Left ventricle myocardium superior (tissue), 1 donor: ENCODE measurements at regions of chr1 and their contacts with region 1.

Region 1: DNA sequence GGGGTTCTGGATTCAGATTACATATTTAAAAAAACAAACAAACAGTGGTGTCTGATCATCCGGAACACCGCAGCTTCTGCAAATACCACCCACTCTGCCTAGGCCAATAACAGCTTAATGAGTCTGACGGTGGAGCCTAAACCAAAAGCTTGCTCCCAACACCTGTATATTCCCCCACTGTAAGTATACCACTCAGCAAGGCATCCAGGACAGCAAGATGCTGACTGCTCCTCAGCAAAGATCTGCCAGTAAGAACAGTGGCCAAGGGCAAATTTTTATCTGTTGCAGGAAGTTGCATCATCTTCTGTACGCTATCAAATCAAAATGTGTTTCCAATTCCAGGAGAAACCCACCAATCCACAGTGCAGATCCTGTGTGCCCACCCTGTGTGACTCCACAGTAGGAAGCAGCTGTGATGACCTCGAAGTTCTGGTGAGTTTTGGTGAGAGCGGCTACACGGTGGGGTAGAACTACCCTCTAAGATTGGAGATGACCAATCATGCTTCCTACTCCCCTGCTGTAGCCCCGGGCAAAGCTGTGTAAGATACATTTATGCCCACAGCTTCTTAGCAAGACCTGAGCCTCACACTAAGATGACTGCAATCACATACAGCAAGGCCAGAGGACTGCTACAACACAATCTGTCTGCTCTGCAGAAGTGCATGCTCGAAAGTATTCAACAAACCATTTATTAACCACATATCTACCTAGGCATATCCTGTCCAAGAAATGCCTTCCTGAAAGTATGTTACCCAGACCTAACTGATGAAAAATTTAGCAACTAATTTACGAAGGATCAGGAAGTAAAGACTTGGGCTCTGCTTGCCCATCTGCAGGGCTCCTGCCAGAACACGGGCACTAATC is 30.5 kb downstream of the SIPA1L2 start:
- DNase-seq: no peak
- ATAC-seq: no peak

Region 2: DNA sequence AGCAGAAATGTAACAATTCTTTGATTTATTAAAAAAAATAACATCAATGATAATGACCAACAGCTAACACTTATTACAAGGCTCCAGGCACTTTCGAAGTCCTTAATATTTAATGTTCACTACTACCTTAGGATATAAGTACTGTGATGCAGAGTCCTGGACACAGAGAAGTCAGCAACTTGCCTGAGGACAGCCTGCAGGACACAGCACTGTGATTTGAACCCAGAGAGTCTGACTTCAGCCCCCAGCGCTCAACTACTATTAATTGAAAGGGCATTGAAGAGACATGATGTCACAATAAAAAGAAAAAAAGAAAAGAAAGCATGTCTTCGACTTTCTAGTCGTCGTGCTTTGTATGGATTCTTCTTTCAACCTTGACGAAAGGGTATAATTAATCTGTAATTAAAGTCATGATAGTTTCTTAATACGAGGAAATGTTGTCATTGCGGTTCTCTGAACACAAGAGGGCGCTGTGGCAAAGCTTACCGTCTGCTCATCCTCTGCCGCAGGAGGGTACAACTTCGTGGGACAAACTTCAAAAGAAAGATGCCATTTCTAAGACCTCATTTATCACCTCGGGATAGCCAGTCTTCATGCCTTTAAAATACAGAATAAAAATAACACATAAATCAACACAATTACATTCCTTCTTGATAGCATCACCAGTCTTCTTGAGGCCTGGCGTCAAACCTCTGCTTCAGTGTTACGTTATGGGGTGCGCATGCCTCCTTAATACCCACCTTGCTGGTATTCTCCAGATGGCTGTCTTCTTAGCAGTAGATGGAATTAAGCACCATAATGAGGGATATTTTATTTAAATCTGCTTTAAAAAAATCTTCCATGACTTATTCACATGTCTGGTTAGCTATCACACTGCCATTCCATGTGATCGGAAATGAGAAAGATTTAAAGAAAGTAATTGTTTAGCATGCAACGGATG is 732.7 kb before region 1 on chr1:
- intact Hi-C with region 1: loop called (anchors 10 kb)
- DNase-seq: peak; percentile 61
- ATAC-seq: peak; percentile 45

Region 3: DNA sequence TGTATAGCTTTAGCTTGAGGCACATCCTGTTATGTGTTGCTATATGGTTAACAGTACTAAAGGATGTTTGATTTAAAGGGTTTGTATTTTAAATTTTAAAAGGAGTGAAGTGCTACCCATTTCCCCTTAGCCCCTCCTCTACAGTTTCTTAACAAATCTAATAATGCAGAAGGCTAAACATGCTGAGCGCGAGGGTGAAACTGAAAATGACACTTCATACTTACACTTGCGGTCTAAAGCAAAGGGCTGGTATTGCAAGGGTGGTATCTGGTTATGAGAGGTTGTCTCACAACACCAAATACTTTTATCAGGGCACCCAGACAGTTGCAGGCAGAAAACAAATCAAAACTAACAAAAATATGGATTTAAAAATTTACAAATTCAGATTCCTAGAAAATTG is 141.8 kb before region 1 on chr1:
- intact Hi-C with region 1: no loop called
- DNase-seq: no peak
- ATAC-seq: peak; percentile 34